ENCODE measurements at regions of chr5 and their contacts with region 1.

Region 1: GRCh38 chr5:43997647-43998251 is 391.5 kb downstream of the FGF10 start:
- DNase-seq: peak; percentile 95
- ATAC-seq: peak; percentile 91
- H3K4me3 ChIP-seq: peak overlapping the region in 1 of 3 experiments; percentile 27; a peak in 2 of 6 replicates
- H3K27ac ChIP-seq: peak overlapping the region; percentile 71
- H3K4me1 ChIP-seq: peaks cover 86% of the 10 kb centered on the region
- H3K27me3 ChIP-seq: no peaks in the 10 kb centered on the region
- CTCF ChIP-seq: 0 out of 2 replicates have a peak, but pooled peaks have one; percentile 19
- EP300 ChIP-seq: peak; percentile 87 to 90; a peak in 3 of 4 replicates
- POLR2A ChIP-seq: no peak
- RAD21 ChIP-seq: no peak

Region 2: GRCh38 chr5:44808435-44809214 is 810.9 kb after region 1 on chr5 and contains the start of gene MRPS30:
- CTCF ChIA-PET with region 1: no interaction called
- POLR2A ChIA-PET with region 1: no interaction called
- in situ Hi-C with region 1: no loop called
- intact Hi-C with region 1: loop called (anchors 10 kb)
- DNase-seq: peak; percentile 99
- ATAC-seq: peak; percentile 94
- H3K4me3 ChIP-seq: peak within 1 kb of the TSS; percentile 85 to 96 (median 87)
- H3K27ac ChIP-seq: peak within 1 kb of the TSS; percentile 93
- H3K4me1 ChIP-seq: peaks cover 26% of the 10 kb centered on the region
- H3K27me3 ChIP-seq: no peaks in the 10 kb centered on the region; a peak in 1 of 5 replicates
- CTCF ChIP-seq: peak; percentile 70
- EP300 ChIP-seq: peak in 1 of 2 experiments; percentile 29; a peak in 2 of 4 replicates
- POLR2A ChIP-seq: peak; percentile 87 to 93
- RAD21 ChIP-seq: no peak
- total RNA-seq, gene MRPS30: 67.4 and 67.6 TPM in 2 replicates

Measured in HepG2 (cell line).